ENCODE measurements at regions of chr7 and their contacts with region 1.

Region 1: GRCh38 chr7:100852048-100852872 is at the start of gene SLC12A9:
- DNase-seq: peak; percentile 86
- H3K4me3 Mint-ChIP-seq: peak within 1 kb of the TSS; percentile 93
- H3K27ac Mint-ChIP-seq: peak within 1 kb of the TSS; percentile 79
- H3K4me1 Mint-ChIP-seq: peaks cover 8% of the 10 kb centered on the region
- H3K27me3 Mint-ChIP-seq: peaks cover 5% of the 10 kb centered on the region
- total RNA-seq, gene SLC12A9: 46.0 and 47.9 TPM in 2 replicates

Region 2: GRCh38 chr7:100568896-100569844 is 283.1 kb before region 1 on chr7:
- intact Hi-C with region 1: loop called (anchors 5 kb)
- DNase-seq: no peak
- H3K4me3 Mint-ChIP-seq: peak overlapping the region; percentile 11
- H3K27ac Mint-ChIP-seq: no peak overlapping the region
- H3K4me1 Mint-ChIP-seq: peaks cover 29% of the 10 kb centered on the region
- H3K27me3 Mint-ChIP-seq: peaks cover 7% of the 10 kb centered on the region

Region 3: GRCh38 chr7:100611974-100612729 is 240.1 kb before region 1 on chr7 and contains the start of gene MOSPD3:
- intact Hi-C with region 1: loop called (anchors 1 kb)
- DNase-seq: peak; percentile 97
- H3K4me3 Mint-ChIP-seq: peak within 1 kb of the TSS; percentile 98
- H3K27ac Mint-ChIP-seq: peak within 1 kb of the TSS; percentile 100
- H3K4me1 Mint-ChIP-seq: peaks cover 22% of the 10 kb centered on the region
- H3K27me3 Mint-ChIP-seq: peaks cover 8% of the 10 kb centered on the region
- total RNA-seq, gene MOSPD3: 10.3 and 11.5 TPM in 2 replicates

Region 4: DNA sequence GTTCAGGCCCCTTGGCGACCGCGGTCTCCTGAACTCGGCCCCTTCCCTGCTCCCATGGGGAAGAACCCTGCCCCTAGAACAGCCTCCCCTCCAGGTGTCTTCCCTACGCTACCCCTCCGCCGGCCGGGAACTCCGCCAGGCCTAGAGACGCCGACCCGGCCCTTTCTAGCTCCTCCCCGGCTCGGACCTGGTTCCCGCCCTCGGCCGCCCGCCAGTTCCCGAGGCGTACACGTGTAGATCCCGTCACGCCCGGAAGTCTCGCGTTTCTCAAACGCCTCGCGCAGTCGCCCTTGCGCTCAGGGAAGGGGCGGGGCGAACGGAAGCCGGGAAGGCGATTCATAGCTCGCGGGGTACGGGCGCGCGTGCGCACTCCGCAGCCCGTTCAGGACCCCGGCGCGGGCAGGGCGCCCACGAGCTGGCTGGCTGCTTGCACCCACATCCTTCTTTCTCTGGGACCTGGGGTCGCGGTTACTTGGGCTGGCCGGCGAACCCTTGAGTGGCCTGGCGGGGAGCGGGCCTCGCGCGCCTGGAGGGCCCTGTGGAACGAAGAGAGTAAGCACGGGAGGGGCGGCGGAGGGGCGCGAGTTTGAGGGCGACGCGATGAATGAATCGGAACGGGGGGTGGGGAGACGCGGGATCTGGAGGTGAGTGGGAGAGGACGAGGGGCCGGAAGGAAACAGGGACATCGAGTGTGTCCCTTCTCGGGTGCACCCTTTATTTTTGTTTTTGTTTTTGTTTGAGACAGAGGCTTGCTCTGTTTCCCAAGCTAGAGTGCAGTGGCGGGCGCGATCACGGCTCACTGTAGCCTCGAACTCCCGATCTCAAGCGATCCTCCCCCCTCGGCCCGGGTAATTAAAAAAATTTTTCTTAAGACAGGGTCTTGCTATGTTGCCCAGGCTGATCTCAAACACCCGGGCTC is 146.2 kb before region 1 on chr7 and contains the start of gene POP7:
- intact Hi-C with region 1: loop called (anchors 1 kb)
- DNase-seq: peak; percentile 99
- H3K4me3 Mint-ChIP-seq: peak within 1 kb of the TSS; percentile 98
- H3K27ac Mint-ChIP-seq: peak within 1 kb of the TSS; percentile 98
- H3K4me1 Mint-ChIP-seq: peaks cover 7% of the 10 kb centered on the region
- H3K27me3 Mint-ChIP-seq: peaks cover 13% of the 10 kb centered on the region
- total RNA-seq, gene POP7: 82.7 and 84.4 TPM in 2 replicates

Region 5: GRCh38 chr7:100867040-100867775 is 14.9 kb after region 1 on chr7 and contains the start of gene TRIP6:
- intact Hi-C with region 1: loop called (anchors 1 kb)
- DNase-seq: peak; percentile 43
- H3K4me3 Mint-ChIP-seq: peak within 1 kb of the TSS; percentile 91
- H3K27ac Mint-ChIP-seq: peak within 1 kb of the TSS; percentile 90
- H3K4me1 Mint-ChIP-seq: peaks cover 12% of the 10 kb centered on the region
- H3K27me3 Mint-ChIP-seq: peaks cover 2% of the 10 kb centered on the region
- total RNA-seq, gene TRIP6: 41.5 and 44.1 TPM in 2 replicates

Region 6: GRCh38 chr7:101058355-101058754 is 206.1 kb after region 1 on chr7:
- intact Hi-C with region 1: loop called (anchors 1 kb)
- DNase-seq: peak; percentile 38
- H3K4me3 Mint-ChIP-seq: no peak overlapping the region
- H3K27ac Mint-ChIP-seq: no peak overlapping the region
- H3K4me1 Mint-ChIP-seq: peaks cover 7% of the 10 kb centered on the region
- H3K27me3 Mint-ChIP-seq: peaks cover 24% of the 10 kb centered on the region

Region 7: DNA sequence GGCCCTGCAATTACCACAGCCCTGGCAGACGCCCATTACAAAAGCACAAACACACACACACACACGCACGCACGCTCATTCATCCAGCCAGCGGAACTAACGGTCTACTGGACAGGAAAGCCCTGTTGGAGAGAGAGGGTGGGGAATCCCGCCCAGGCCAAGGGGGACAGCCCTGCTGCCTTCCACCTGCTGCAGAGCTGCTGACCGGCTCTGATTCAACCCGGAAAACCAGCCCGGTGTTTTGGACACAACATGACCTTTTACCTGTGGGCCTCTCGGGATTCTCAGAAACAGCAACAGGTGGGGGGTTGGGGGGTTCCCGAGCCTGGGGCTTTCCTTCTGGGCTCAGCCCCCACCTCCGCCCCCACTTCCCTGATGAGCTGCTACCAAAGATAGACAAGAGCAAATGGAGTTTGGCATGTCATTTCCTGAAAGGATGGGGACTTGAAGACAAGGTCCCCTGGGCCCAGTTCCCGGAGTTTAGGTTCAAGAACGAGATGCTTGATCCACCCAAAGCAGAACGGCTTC is 256.1 kb after region 1 on chr7:
- intact Hi-C with region 1: no loop called
- DNase-seq: no peak
- H3K4me3 Mint-ChIP-seq: no peak overlapping the region
- H3K27ac Mint-ChIP-seq: no peak overlapping the region
- H3K4me1 Mint-ChIP-seq: no peaks in the 10 kb centered on the region
- H3K27me3 Mint-ChIP-seq: peaks cover 4% of the 10 kb centered on the region